ENCODE measurements at regions of chr14 and their contacts with region 1.

Region 1: DNA sequence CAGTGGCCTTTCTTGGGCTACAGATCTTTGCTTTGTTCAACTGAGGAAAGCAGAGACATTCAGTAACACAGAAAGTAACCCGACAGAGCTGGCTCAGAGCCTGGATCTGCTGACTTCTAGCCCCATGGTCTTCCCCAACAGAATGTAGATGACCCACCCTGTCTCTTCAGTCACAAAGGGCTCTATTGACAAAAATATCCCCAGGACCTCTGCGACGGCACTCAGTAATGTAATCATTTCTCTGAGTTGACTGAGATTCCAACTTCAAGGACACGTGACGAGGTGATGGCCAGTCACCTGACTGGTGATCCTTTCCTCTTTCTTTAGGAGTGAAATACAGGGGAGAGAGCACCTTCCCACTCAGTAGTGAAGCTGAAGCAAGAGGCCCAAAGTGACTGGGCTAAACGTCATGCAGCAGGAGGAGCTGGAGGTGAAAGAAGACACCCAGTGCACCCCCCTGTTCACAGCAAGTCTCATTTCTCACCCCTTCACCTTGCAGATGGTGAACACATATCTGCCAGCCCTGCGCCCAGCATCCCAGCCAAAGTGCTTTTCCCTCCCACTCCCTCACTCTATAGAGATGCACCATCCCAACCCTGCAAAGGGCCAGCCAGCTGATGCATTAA is 179.2 kb upstream of the EGLN3 start:
- DNase-seq: no peak
- H3K4me3 Mint-ChIP-seq: no peak overlapping the region
- H3K27ac Mint-ChIP-seq: no peak overlapping the region
- H3K4me1 Mint-ChIP-seq: peaks cover 12% of the 10 kb centered on the region
- H3K27me3 Mint-ChIP-seq: no peaks in the 10 kb centered on the region
- CTCF ChIP-seq: no peak

Region 2: GRCh38 chr14:34113005-34113511 is 17.0 kb before region 1 on chr14:
- CTCF ChIA-PET with region 1: interaction called, 8 read pairs
- POLR2A ChIA-PET with region 1: interaction called, 12 read pairs
- intact Hi-C with region 1: no loop called
- DNase-seq: peak; percentile 65
- H3K4me3 Mint-ChIP-seq: peak overlapping the region; percentile 51
- H3K27ac Mint-ChIP-seq: peak overlapping the region; percentile 75
- H3K4me1 Mint-ChIP-seq: peaks cover 37% of the 10 kb centered on the region
- H3K27me3 Mint-ChIP-seq: no peaks in the 10 kb centered on the region
- CTCF ChIP-seq: no peak

Region 3: GRCh38 chr14:34165829-34166350 is 35.9 kb after region 1 on chr14:
- CTCF ChIA-PET with region 1: no interaction called
- POLR2A ChIA-PET with region 1: no interaction called
- intact Hi-C with region 1: no loop called
- DNase-seq: no peak
- H3K4me3 Mint-ChIP-seq: no peak overlapping the region
- H3K27ac Mint-ChIP-seq: no peak overlapping the region
- H3K4me1 Mint-ChIP-seq: peaks cover 7% of the 10 kb centered on the region
- H3K27me3 Mint-ChIP-seq: no peaks in the 10 kb centered on the region
- CTCF ChIP-seq: no peak

Region 4: GRCh38 chr14:34310724-34311123 is 180.7 kb after region 1 on chr14:
- CTCF ChIA-PET with region 1: no interaction called
- POLR2A ChIA-PET with region 1: no interaction called
- intact Hi-C with region 1: no loop called
- DNase-seq: no peak
- H3K4me3 Mint-ChIP-seq: no peak overlapping the region
- H3K27ac Mint-ChIP-seq: no peak overlapping the region
- H3K4me1 Mint-ChIP-seq: no peaks in the 10 kb centered on the region
- H3K27me3 Mint-ChIP-seq: no peaks in the 10 kb centered on the region
- CTCF ChIP-seq: no peak

Measured in MCF 10A (cell line).